H1 (cell line): ENCODE measurements at regions of chr11 and their contacts with region 1.

Region 1: GRCh38 chr11:93099806-93100205 is 98.0 kb downstream of the SLC36A4 start:
- DNase-seq: no peak
- H3K4me3 ChIP-seq: no peak overlapping the region
- H3K27ac ChIP-seq: no peak overlapping the region
- H3K4me1 ChIP-seq: peaks cover 0 to 3% (median 1%) of the 10 kb centered on the region in 4 experiments; a peak in 3 of 7 replicates
- H3K27me3 ChIP-seq: no peaks in the 10 kb centered on the region
- CTCF ChIP-seq: no peak
- EP300 ChIP-seq: no peak
- POLR2A ChIP-seq: no peak
- RAD21 ChIP-seq: no peak

Region 2: DNA sequence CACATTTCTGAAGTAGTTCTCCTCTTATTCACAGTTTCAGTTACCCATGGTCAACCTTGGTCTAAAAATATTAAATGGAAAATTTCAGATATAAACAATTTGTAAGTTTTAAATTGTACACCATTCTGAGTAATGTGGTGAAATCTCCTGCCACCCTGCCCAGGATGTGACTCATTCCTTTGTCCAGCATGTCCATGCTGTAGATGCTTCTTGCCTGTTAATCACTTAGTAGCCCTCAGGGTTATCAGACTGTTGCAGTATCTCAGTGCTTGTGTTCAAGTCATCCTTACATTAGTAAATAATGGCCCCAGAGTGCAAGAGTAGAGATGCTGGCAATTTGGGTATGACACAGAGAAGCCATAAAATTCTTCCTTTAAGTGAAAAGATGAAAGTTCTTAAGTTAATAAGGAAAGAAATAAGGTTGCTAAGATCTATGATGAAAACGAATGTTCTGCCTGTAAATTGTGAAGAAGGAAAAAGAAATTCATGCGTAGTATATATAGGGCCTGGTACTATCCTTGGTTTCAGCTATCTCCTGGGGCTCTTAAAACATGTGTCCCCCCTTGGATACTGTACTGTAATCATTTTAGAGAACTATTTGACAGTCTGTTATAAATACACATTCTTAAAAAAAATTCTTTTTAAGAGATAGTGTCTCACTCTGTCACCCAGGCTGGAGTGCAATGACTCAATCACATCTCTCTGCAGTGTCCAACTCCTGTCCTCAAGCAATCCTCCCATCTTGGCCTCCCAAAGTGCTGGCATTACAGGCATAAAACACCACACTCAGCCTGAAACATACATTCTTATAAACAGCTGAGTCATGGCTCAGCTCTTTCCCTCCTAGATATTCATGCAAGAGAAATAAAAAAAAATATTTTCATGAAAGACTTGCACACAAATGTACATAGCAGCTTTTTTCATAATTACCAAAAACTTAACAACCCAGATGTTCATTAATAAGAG is 99.0 kb before region 1 on chr11:
- CTCF ChIA-PET with region 1: no interaction called
- POLR2A ChIA-PET with region 1: no interaction called
- DNase-seq: no peak
- H3K4me3 ChIP-seq: no peak overlapping the region
- H3K27ac ChIP-seq: no peak overlapping the region
- H3K4me1 ChIP-seq: no peaks in the 10 kb centered on the region
- H3K27me3 ChIP-seq: no peaks in the 10 kb centered on the region
- CTCF ChIP-seq: no peak
- EP300 ChIP-seq: no peak
- POLR2A ChIP-seq: no peak
- RAD21 ChIP-seq: no peak

Region 3: DNA sequence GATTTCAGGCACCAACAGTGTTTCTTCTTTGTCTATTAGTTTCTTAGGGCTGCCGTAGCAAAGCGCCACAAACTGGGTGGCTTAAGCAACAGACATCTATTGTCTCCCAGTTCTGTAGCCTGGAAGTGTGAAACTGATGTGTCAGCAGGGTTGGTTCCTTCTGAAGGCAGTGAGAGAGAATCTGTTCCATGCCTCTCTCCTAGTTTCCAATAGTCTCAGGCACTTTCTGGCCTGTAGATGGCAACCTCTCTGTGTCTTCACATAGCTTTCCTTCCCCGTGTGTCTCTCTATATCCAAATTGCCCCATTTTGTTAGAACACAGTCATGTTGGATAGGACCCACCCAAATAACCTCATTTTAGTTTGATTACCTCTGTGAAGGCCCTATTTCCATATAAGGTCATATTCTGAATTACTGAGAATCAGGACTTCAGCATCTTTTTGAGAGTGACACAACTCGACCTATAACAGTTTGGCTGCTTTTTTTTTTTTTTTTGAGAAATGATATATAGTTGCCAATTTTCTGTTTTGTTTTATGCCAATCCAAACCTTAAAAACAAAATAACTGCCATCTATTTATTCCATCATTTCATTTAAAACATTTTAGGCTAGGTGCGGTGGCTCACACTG is 10.2 kb before region 1 on chr11:
- CTCF ChIA-PET with region 1: interaction called, 22 read pairs
- POLR2A ChIA-PET with region 1: no interaction called
- DNase-seq: no peak
- H3K4me3 ChIP-seq: no peak overlapping the region
- H3K27ac ChIP-seq: no peak overlapping the region
- H3K4me1 ChIP-seq: peaks cover 0 to 9% (median 3%) of the 10 kb centered on the region in 4 experiments; a peak in 4 of 7 replicates
- H3K27me3 ChIP-seq: no peaks in the 10 kb centered on the region
- CTCF ChIP-seq: peak in 2 of 3 experiments; percentile 54 to 80; a peak in 3 of 4 replicates
- EP300 ChIP-seq: no peak; a peak in 1 of 3 replicates
- POLR2A ChIP-seq: no peak
- RAD21 ChIP-seq: peak; percentile 54 to 70

Region 4: GRCh38 chr11:93209466-93209865 is 109.7 kb after region 1 on chr11:
- CTCF ChIA-PET with region 1: no interaction called
- POLR2A ChIA-PET with region 1: no interaction called
- DNase-seq: no peak
- H3K4me3 ChIP-seq: no peak overlapping the region
- H3K27ac ChIP-seq: no peak overlapping the region
- H3K4me1 ChIP-seq: no peaks in the 10 kb centered on the region
- H3K27me3 ChIP-seq: no peaks in the 10 kb centered on the region
- CTCF ChIP-seq: no peak
- EP300 ChIP-seq: no peak
- POLR2A ChIP-seq: no peak
- RAD21 ChIP-seq: no peak